Left ventricle myocardium inferior (tissue), 1 donor: ENCODE measurements at regions of chr5 and their contacts with region 1.

Region 1: GRCh38 chr5:157431544-157432200 is 28.3 kb upstream of the NIPAL4 start:
- DNase-seq: no peak
- H3K4me3 ChIP-seq: no peak overlapping the region
- H3K27ac ChIP-seq: no peak overlapping the region
- H3K4me1 ChIP-seq: peaks cover 4% of the 10 kb centered on the region
- H3K27me3 ChIP-seq: no peaks in the 10 kb centered on the region
- CTCF ChIP-seq: peak; percentile 69

Region 2: GRCh38 chr5:157718519-157718918 is 286.8 kb after region 1 on chr5:
- intact Hi-C with region 1: loop called (anchors 2 kb)
- DNase-seq: no peak
- H3K4me3 ChIP-seq: no peak overlapping the region
- H3K27ac ChIP-seq: peak overlapping the region; percentile 22
- H3K4me1 ChIP-seq: peaks cover 8% of the 10 kb centered on the region
- H3K27me3 ChIP-seq: no peaks in the 10 kb centered on the region
- CTCF ChIP-seq: peak; percentile 74